T-cell (primary cell): ENCODE measurements at regions of chr16 and their contacts with region 1.

Region 1: GRCh38 chr16:50024684-50025536 is at the start of gene CNEP1R1:
- DNase-seq: peak; percentile 76 to 96 (median 87)
- ATAC-seq: peak; percentile 94 to 97 (median 96)
- H3K4me3 ChIP-seq: peak within 1 kb of the TSS; percentile 75 to 80
- H3K4me3 Mint-ChIP-seq: peak within 1 kb of the TSS; percentile 92 to 94 (median 93)
- H3K27ac ChIP-seq: peak within 1 kb of the TSS; percentile 56
- H3K27ac Mint-ChIP-seq: peak within 1 kb of the TSS; percentile 87 to 90
- H3K4me1 ChIP-seq: peaks cover 8 to 18% of the 10 kb centered on the region in 2 experiments
- H3K4me1 Mint-ChIP-seq: peaks cover 26 to 35% (median 34%) of the 10 kb centered on the region in 3 donors
- H3K27me3 ChIP-seq: peaks cover 0 to under 1% of the 10 kb centered on the region in 2 experiments
- H3K27me3 Mint-ChIP-seq: no peaks in the 10 kb centered on the region
- total RNA-seq, gene CNEP1R1: 26.7 to 32.9 (median 27.5) TPM

Region 2: GRCh38 chr16:49969091-49970030 is 55.5 kb before region 1 on chr16:
- CTCF ChIA-PET with region 1: no interaction called
- POLR2A ChIA-PET with region 1: no interaction called
- DNase-seq: no peak
- ATAC-seq: no peak
- H3K4me3 ChIP-seq: no peak overlapping the region
- H3K4me3 Mint-ChIP-seq: no peak overlapping the region
- H3K27ac ChIP-seq: no peak overlapping the region
- H3K27ac Mint-ChIP-seq: no peak overlapping the region
- H3K4me1 ChIP-seq: no peaks in the 10 kb centered on the region
- H3K4me1 Mint-ChIP-seq: peaks cover 0 to 5% (median 0%) of the 10 kb centered on the region in 3 donors
- H3K27me3 ChIP-seq: peaks cover 0 to 32% of the 10 kb centered on the region in 2 experiments
- H3K27me3 Mint-ChIP-seq: peaks cover 21 to 35% of the 10 kb centered on the region in 2 donors

Region 3: DNA sequence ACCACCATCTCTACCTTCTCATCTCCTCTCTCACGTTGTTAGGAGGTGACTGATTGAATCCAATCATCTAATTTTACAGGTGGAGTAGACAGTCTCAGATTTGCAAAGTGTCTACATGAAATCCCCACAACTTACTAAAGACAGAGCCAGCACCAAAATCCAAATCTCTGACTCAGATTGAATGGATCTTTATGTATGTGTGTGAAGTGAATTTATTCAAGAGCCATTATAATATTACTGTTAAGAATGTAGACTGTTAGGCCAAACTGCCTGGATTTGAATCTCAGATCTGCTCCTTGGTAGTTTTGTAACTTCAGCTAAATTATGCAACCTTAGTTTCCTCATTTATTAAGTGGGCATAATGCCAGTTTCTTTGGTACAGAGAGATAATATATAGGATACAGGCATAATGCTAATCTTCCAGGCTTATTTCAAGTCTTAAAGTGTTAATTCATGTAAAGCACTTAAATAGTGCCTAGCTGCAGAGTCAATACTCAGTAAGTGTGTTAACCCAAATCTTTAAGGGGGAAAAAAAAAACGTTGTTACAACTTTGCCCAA is 12.8 kb after region 1 on chr16:
- CTCF ChIA-PET with region 1: interaction called, 3 to 11 read pairs
- POLR2A ChIA-PET with region 1: interaction called in 1 of 2 experiments, 5 read pairs
- DNase-seq: no peak
- ATAC-seq: no peak
- H3K4me3 ChIP-seq: no peak overlapping the region
- H3K4me3 Mint-ChIP-seq: no peak overlapping the region
- H3K27ac ChIP-seq: no peak overlapping the region
- H3K27ac Mint-ChIP-seq: no peak overlapping the region
- H3K4me1 ChIP-seq: no peaks in the 10 kb centered on the region
- H3K4me1 Mint-ChIP-seq: peaks cover 6 to 12% (median 7%) of the 10 kb centered on the region in 3 donors
- H3K27me3 ChIP-seq: no peaks in the 10 kb centered on the region
- H3K27me3 Mint-ChIP-seq: peaks cover 3 to 4% of the 10 kb centered on the region in 2 donors

Region 4: DNA sequence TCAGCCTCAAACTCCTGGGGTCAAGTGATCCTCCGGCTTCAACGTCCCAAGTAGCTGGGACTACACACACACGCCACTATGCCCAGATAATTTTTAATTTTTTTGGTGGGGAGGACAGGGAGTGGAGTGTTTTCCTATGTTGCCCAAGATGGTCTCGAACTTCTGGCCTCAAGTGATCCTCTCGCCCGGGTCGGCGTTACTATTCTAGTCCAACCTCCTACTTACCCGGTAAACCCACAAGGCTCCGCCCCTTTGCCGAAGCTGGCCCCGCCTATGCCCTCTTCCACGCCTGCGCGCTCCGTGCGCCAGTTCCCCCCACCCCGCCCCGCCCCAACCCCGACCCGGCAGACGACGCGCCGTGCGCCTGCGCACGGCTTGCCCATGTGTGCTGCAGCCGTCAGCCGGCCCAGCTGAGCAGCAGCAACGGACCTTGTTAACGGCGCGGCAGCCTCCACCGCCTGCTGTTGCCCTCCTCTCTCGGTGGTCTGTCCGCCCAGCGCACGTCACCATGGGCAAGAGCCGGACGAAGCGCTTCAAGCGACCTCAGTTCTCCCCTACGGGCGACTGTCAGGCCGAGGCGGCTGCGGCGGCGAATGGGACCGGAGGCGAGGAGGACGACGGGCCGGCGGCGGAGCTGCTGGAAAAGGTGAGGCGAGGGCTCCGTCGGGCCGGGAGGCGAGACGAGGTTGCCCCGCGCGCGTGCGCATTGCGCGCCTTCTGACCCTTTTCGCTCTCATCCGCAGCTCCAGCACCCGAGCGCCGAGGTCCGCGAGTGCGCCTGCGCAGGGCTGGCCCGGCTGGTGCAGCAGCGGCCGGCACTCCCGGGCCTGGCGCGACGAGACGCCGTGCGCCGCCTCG is 40.9 kb after region 1 on chr16 and contains the start of gene HEATR3:
- CTCF ChIA-PET with region 1: interaction called, 7 to 40 read pairs
- POLR2A ChIA-PET with region 1: interaction called in 1 of 2 experiments, 8 read pairs
- DNase-seq: peak; percentile 80 to 98 (median 91)
- ATAC-seq: peak; percentile 84 to 87 (median 86)
- H3K4me3 ChIP-seq: peak within 1 kb of the TSS; percentile 80 to 84
- H3K4me3 Mint-ChIP-seq: peak within 1 kb of the TSS; percentile 86 to 93 (median 87)
- H3K27ac ChIP-seq: peak within 1 kb of the TSS; percentile 56
- H3K27ac Mint-ChIP-seq: peak within 1 kb of the TSS; percentile 88 to 92
- H3K4me1 ChIP-seq: peaks cover 13 to 24% of the 10 kb centered on the region in 2 experiments
- H3K4me1 Mint-ChIP-seq: peaks cover 39 to 44% (median 41%) of the 10 kb centered on the region in 3 donors
- H3K27me3 ChIP-seq: no peaks in the 10 kb centered on the region
- H3K27me3 Mint-ChIP-seq: no peaks in the 10 kb centered on the region
- total RNA-seq, gene HEATR3: 17.0 to 28.4 (median 24.6) TPM

Region 5: DNA sequence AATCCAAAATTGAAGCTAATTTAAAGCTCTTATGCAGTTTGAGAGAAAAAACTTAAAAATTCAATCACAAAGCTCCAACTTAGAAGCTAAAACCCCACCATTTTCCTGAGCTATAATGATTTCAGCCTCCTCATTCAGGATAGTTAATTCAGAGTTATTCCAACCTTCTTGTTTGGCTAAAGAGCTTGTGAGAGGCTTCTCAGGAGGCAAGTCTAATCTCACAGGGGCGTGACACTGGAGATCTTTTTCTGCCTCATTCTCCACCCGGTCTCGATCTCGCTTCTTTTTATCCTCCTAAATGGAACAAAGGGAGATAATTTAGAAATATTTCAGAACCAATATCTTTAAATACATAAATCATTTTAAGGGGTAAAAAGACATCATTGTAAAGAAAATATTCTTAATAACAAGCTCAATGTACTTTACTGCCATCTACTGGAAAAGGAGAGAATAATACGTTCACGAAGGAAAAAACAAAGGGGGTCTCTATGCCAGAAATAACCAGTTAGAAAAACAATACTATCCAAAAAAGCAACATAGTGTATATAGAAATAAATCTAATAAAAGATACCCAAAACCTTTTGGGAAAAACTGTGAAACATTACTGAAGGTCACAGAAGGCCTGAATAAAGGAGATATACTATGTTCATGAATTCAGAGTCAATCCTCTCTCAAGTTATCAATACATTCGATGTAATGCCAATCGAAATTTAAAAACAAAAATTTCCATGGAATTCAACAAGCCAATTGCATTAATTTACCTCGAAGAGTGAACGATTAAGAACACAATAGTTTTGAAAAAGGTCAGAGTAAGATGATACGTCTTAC is 329.9 kb after region 1 on chr16:
- CTCF ChIA-PET with region 1: interaction called, 4 to 16 read pairs
- POLR2A ChIA-PET with region 1: no interaction called
- DNase-seq: peak in 2 of 35 experiments; percentile 34 to 51
- ATAC-seq: no peak
- H3K4me3 ChIP-seq: no peak overlapping the region
- H3K4me3 Mint-ChIP-seq: no peak overlapping the region
- H3K27ac ChIP-seq: no peak overlapping the region
- H3K27ac Mint-ChIP-seq: peak overlapping the region; percentile 0 to 64
- H3K4me1 ChIP-seq: no peaks in the 10 kb centered on the region
- H3K4me1 Mint-ChIP-seq: peaks cover 24 to 54% (median 25%) of the 10 kb centered on the region in 3 donors
- H3K27me3 ChIP-seq: no peaks in the 10 kb centered on the region
- H3K27me3 Mint-ChIP-seq: no peaks in the 10 kb centered on the region